OCI-LY7 (cell line): ENCODE measurements at regions of chr14 and their contacts with region 1.

Region 1: GRCh38 chr14:67166450-67166853 is 22.8 kb upstream of the GARIN2 start:
- DNase-seq: peak; percentile 49
- H3K4me3 ChIP-seq: no peak overlapping the region
- H3K27ac ChIP-seq: no peak overlapping the region
- H3K4me1 ChIP-seq: no peaks in the 10 kb centered on the region
- CTCF ChIP-seq: peak; percentile 94

Region 2: DNA sequence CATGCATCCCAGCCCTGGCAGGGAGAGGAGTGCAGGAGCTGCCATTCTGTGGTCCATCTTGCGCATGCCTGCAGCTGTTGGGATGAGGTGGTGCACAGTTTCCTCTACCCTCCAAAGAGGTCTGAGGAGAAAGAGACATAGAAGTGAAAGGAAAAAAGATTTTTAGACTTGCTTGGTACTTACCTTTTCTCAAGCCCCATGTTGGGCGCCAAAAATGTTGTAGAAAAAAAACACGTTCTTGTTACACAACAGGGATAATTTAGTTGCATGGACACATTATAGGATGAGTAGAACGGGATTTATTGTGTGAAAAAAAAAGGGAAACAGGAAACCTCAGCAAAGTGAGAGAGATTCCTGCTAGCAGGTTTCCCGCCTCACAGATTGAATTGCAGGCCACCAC is 221.6 kb before region 1 on chr14:
- CTCF ChIA-PET with region 1: no interaction called
- POLR2A ChIA-PET with region 1: no interaction called
- intact Hi-C with region 1: no loop called
- DNase-seq: peak; percentile 24
- H3K4me3 ChIP-seq: no peak overlapping the region
- H3K27ac ChIP-seq: no peak overlapping the region
- H3K4me1 ChIP-seq: no peaks in the 10 kb centered on the region
- CTCF ChIP-seq: no peak

Region 3: DNA sequence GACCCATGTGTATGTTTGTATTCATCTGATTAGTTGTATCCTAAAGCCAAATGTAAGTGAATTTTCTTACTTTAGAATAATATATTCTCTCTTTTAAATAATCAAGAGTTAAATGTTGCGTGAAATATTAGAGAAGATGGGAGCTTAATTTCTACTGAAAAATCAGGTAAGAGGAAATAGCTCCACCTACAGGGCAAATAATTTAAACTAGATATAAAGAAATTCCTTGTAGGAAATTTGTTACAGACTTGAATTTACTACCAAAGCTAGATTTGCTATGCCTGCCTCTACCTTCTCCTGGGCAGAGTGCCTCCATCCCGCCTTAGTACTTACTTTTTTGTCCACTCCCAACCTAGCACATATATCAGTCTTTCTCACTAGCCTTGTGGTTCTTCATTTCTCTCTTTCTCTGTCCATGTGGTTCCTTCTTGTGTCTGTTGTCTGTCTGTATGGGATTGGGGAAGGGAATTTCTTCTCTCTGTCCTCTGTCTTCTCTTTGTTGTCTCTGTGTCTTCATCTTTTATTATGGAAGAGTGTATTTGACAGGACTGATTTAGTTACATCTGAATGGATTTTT is 119.5 kb after region 1 on chr14:
- CTCF ChIA-PET with region 1: no interaction called
- POLR2A ChIA-PET with region 1: no interaction called
- intact Hi-C with region 1: loop called (anchors 1 kb)
- DNase-seq: peak; percentile 54
- H3K4me3 ChIP-seq: no peak overlapping the region
- H3K27ac ChIP-seq: no peak overlapping the region
- H3K4me1 ChIP-seq: no peaks in the 10 kb centered on the region
- CTCF ChIP-seq: peak; percentile 86

Region 4: DNA sequence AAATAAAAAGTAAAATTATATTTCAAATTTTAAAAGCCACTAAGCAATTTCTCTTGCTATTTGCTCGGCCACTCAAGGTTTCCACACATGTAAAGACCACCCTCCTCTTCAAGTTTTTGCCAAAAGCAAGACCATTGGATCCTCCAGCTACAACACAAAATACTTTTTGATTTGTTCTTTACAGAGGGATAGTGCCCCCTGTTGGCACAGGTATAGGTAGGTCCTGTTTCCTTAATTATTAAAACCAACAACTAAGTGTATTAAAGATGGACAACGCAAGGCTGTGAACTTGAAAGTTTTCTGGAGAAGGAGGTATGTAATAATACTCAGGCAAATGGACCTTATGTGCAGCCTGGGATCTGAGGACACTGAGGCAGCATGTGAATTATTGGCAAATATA is 169.3 kb after region 1 on chr14:
- CTCF ChIA-PET with region 1: no interaction called
- POLR2A ChIA-PET with region 1: no interaction called
- intact Hi-C with region 1: loop called (anchors 5 kb)
- DNase-seq: peak; percentile 34
- H3K4me3 ChIP-seq: no peak overlapping the region
- H3K27ac ChIP-seq: no peak overlapping the region
- H3K4me1 ChIP-seq: no peaks in the 10 kb centered on the region
- CTCF ChIP-seq: peak; percentile 76